AG04449 (cell line): ENCODE measurements at regions of chr1 and their contacts with region 1.

Region 1: GRCh38 chr1:110034451-110035235 is at the start of gene STRIP1:
- DNase-seq: peak; percentile 78
- H3K4me3 ChIP-seq: peak within 1 kb of the TSS; percentile 84
- CTCF ChIP-seq: no peak

Region 2: DNA sequence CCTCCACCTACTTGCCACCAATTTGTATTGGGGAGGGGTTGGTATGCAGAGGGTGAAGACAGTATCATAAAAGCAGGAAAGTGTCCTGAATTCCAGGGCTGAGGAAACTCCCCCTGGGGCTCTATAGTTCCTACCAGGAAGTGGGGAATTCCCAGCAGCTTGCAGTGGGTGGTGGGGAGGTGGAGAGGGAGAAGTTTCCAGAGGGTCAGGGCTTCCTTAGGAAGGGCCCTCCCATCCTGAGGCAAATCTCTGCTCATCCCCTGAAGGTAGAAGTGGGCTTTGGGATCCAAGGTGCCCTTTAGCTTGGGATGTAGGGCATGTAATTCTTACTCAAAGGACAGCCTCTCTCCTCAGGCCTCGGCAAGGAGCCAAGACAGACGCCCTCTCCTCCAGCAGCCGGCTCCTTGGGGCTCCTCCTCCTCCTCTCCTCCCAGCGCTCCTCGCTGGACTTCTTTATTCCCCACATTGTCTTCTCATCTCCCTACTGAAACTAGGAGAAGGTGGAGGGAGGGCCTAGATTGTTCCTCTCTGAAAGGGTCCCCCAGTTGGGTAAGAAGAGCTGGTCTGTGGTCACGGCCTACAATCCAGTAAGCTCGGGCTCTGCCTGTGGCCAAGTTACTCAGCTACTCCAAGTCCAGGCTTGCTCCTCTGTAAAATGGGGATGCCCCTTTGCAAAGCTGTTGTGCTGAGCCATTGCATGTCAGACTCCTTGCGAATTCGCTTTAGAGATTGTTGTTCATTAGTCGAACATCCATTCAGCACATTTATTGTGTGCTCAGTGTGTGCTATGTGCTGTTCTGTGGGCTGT is 141.9 kb before region 1 on chr1:
- CTCF ChIA-PET with region 1: no interaction called
- POLR2A ChIA-PET with region 1: no interaction called
- DNase-seq: no peak
- H3K4me3 ChIP-seq: no peak overlapping the region
- CTCF ChIP-seq: no peak

Region 3: GRCh38 chr1:109975718-109976117 is 58.9 kb before region 1 on chr1:
- CTCF ChIA-PET with region 1: no interaction called
- POLR2A ChIA-PET with region 1: no interaction called
- DNase-seq: peak; percentile 59
- H3K4me3 ChIP-seq: no peak overlapping the region
- CTCF ChIP-seq: no peak

Region 4: DNA sequence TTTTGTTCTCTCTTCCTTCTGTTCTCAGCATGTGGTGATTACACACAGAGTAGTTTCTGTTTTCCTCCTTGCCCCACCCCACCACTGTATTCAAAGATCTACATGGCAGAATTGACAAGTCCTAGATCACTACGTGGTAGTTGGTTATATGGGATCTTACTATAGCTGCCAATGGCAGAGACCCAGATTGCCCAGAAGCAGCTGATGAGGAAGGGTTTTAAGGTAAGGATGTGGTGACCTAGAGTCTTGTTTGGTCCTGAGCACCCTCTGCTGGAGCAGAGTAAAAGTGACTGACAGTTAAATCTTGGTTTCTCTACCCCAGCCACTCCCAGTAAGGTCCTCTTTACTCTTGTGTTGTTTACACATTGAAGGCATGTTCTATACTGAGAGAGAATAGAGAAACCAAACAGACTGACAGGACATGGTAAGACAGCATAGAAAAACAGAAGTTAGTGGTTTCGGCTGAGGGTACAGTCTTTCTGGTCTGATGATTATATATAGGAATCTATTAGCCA is 23.1 kb before region 1 on chr1:
- CTCF ChIA-PET with region 1: interaction called, 94 read pairs
- POLR2A ChIA-PET with region 1: no interaction called
- DNase-seq: no peak
- H3K4me3 ChIP-seq: no peak overlapping the region
- CTCF ChIP-seq: peak; percentile 61

Region 5: GRCh38 chr1:110053557-110054428 is 19.1 kb after region 1 on chr1:
- CTCF ChIA-PET with region 1: interaction called, 500 read pairs
- POLR2A ChIA-PET with region 1: interaction called, 15 read pairs
- DNase-seq: no peak
- H3K4me3 ChIP-seq: no peak overlapping the region
- CTCF ChIP-seq: peak; percentile 93

Region 6: DNA sequence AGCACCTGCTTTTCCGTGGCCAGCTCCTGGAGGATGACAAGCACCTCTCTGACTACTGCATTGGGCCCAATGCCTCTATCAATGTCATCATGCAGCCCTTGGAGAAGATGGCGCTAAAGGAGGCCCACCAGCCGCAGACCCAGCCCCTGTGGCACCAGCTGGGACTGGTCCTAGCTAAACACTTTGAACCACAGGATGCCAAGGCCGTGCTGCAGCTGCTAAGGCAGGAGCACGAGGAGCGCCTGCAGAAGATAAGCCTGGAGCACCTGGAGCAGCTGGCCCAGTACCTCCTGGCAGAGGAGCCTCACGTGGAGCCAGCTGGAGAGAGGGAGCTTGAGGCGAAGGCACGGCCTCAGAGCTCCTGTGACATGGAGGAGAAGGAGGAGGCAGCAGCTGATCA is 78.0 kb after region 1 on chr1:
- CTCF ChIA-PET with region 1: interaction called, 183 read pairs
- POLR2A ChIA-PET with region 1: no interaction called
- DNase-seq: no peak
- H3K4me3 ChIP-seq: no peak overlapping the region
- CTCF ChIP-seq: no peak

Region 7: GRCh38 chr1:110645821-110646735 is 611.4 kb after region 1 on chr1:
- CTCF ChIA-PET with region 1: no interaction called
- POLR2A ChIA-PET with region 1: no interaction called
- DNase-seq: no peak
- H3K4me3 ChIP-seq: no peak overlapping the region
- CTCF ChIP-seq: no peak